Activated naive CD4-positive, alpha-beta T cell treated with anti-CD3 and anti-CD28 coated beads, Interleukin-2, amount 10 ng/mL, durations not matched to agents 7 days and 5 days (primary cell): ENCODE measurements at regions of chr20 and their contacts with region 1.

Region 1: GRCh38 chr20:32031007-32031958 is 20.8 kb upstream of the HCK start:
- DNase-seq: peak; percentile 70
- H3K4me3 Mint-ChIP-seq: no peak overlapping the region
- H3K27ac Mint-ChIP-seq: no peak overlapping the region
- H3K4me1 Mint-ChIP-seq: peaks cover 3% of the 10 kb centered on the region
- H3K27me3 Mint-ChIP-seq: peaks cover 55% of the 10 kb centered on the region

Region 2: DNA sequence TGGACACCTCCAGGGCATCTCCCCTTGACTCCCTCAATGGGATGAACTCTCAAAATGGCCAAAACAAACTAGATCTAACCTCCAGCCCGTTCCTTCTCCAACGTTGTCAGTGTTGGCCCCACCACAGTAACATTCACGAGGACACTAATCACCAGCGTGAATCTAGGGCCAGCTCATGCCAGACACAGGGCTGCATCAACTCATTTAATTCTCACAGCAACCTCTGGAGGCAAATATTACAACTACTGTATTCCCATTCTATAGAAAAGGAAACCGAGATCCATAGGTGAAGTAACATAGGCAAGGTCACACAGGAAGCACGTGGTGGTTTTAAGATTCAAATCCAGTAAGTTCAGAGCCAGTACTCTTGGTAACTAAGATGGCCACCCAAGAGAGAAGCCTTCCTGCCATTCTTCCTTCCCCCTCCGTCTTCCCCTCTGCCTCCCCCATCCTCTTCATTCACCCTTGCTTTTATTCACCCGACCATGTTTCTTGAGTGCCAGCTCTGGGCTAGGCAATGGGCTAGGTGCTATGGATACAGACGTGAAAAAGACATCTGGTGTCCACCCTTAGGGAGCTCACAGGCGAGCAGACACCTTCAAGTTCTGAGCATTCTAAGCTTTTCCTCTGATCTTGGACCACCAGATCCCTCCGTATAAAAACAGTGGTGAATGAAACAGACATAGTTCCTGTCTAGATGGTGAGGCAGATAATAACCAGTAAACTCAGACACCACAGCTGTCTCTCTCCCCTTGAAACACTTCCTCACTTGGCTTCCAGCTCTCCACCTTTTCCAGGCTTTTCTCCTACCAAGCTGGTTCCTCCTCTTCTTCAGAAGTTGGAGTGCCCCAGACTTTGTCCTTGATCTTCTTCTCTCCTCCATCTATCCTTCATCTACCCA is 11.5 kb before region 1 on chr20:
- CTCF ChIA-PET with region 1: interaction called, 22 read pairs
- DNase-seq: peak; percentile 14
- H3K4me3 Mint-ChIP-seq: peak overlapping the region; percentile 67
- H3K27ac Mint-ChIP-seq: no peak overlapping the region
- H3K4me1 Mint-ChIP-seq: peaks cover 23% of the 10 kb centered on the region
- H3K27me3 Mint-ChIP-seq: peaks cover 86% of the 10 kb centered on the region